ENCODE measurements at regions of chr6 and their contacts with region 1.

Region 1: GRCh38 chr6:75526502-75527127 is 33.0 kb upstream of the FILIP1 start:
- DNase-seq: peak; percentile 55
- H3K4me3 ChIP-seq: no peak overlapping the region
- H3K27ac ChIP-seq: no peak overlapping the region
- H3K4me1 ChIP-seq: no peaks in the 10 kb centered on the region
- CTCF ChIP-seq: peak; percentile 81

Region 2: GRCh38 chr6:75266716-75267291 is 259.8 kb before region 1 on chr6:
- CTCF ChIA-PET with region 1: no interaction called
- POLR2A ChIA-PET with region 1: no interaction called
- intact Hi-C with region 1: loop called (anchors 2 kb)
- DNase-seq: peak; percentile 63
- H3K4me3 ChIP-seq: no peak overlapping the region
- H3K27ac ChIP-seq: no peak overlapping the region
- H3K4me1 ChIP-seq: no peaks in the 10 kb centered on the region
- CTCF ChIP-seq: peak; percentile 97

Region 3: DNA sequence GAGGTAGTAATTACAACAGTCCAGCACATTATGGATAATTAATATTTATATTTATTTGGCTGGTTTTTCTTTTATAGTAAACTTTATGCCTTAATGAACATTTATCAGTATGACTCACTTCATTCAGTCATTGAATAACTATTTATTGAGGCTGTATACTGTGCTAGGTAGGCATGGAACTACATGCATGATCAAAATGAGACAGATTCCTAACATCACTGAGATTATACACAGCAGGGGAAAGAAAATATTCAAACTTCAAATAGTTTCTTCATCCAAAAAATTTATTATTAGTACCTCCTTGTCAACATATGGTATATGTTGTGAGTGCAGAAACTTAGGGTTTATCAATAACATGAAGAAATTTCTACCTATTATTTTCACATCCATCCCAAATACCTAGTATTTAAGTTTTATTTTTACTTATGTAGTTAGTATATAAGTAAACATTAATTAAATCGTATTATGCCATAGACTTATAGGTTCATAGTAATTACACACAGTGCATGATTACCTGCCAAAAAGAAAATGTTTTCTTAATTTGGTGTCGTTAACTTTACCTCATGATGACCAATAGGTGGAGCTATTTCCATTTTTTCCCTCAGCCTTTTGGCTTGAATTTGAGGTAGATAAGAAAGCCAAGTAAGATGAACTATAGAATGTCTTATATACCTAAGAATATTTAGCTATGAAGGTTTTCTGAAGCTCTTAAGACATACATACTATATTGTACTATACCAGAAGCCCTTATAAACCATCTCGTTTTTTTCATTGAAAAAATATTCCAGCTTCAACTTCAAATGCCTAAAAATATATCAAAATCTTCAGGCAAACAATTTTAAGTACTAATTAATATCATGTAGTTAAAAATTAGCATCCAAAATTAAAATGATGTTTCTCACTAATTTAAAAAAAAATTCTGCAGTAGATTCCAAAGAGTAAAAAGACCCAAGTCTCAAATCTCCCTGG is 229.5 kb before region 1 on chr6:
- CTCF ChIA-PET with region 1: no interaction called
- POLR2A ChIA-PET with region 1: no interaction called
- intact Hi-C with region 1: loop called (anchors 5 kb)
- DNase-seq: peak; percentile 75
- H3K4me3 ChIP-seq: no peak overlapping the region
- H3K27ac ChIP-seq: no peak overlapping the region
- H3K4me1 ChIP-seq: peaks cover 5% of the 10 kb centered on the region
- CTCF ChIP-seq: peak; percentile 95

Region 4: GRCh38 chr6:75539136-75539535 is 12.5 kb after region 1 on chr6:
- CTCF ChIA-PET with region 1: no interaction called
- POLR2A ChIA-PET with region 1: no interaction called
- intact Hi-C with region 1: no loop called
- DNase-seq: no peak
- H3K4me3 ChIP-seq: no peak overlapping the region
- H3K27ac ChIP-seq: no peak overlapping the region
- H3K4me1 ChIP-seq: no peaks in the 10 kb centered on the region
- CTCF ChIP-seq: no peak